ENCODE measurements at regions of chr1 and their contacts with region 1.

Region 1: DNA sequence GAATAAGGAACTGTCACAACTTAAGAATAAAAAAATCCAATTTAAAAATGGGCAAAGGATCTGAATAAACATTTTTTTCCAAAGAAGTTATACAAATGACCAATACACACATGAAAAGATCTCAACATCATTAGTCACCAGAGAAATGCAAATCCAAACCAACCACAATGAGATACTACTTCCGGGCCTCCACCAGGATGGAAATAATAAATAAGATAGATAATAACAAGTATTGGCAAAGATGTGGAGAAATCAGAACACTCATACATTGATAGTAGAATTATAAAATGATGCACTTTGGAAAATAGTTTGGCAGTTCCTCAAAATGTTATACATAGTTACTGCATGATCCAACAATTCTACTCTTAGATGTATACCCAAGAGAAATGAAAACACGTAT is 18.7 kb downstream of the ZSWIM5 start:
- DNase-seq: no peak
- H3K4me3 ChIP-seq: no peak overlapping the region
- H3K27ac ChIP-seq: no peak overlapping the region
- H3K27me3 ChIP-seq: no peaks in the 10 kb centered on the region
- CTCF ChIP-seq: no peak

Region 2: GRCh38 chr1:45037456-45037855 is 150.3 kb before region 1 on chr1:
- CTCF ChIA-PET with region 1: no interaction called
- POLR2A ChIA-PET with region 1: interaction called, 13 read pairs
- DNase-seq: no peak
- H3K4me3 ChIP-seq: no peak overlapping the region
- H3K27ac ChIP-seq: no peak overlapping the region
- H3K27me3 ChIP-seq: peaks cover 2% of the 10 kb centered on the region
- CTCF ChIP-seq: no peak

Region 3: DNA sequence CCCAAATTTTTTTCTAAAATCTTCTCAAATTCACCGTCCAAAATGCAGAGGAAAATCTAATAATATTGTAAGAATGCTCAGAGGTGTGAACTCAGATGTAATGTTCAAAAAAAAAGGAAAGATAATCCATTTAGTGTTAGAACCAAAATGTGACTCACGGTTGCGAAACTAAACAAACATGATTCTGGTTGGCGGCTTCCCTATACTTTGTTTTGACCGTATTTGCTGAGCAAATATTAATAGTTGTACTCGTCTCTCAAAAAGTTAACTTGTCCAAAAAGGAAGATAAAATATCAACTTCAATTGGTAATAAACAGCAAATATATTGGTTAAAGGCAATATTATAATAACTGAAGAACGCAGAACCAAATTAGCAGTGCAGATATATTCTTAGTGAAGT is 15.7 kb before region 1 on chr1:
- CTCF ChIA-PET with region 1: no interaction called
- POLR2A ChIA-PET with region 1: no interaction called
- DNase-seq: no peak
- H3K4me3 ChIP-seq: no peak overlapping the region
- H3K27ac ChIP-seq: no peak overlapping the region
- H3K27me3 ChIP-seq: peaks cover 2% of the 10 kb centered on the region
- CTCF ChIP-seq: no peak

Region 4: GRCh38 chr1:45205910-45206721 is 18.4 kb after region 1 on chr1 and contains the start of gene ZSWIM5:
- CTCF ChIA-PET with region 1: no interaction called
- POLR2A ChIA-PET with region 1: no interaction called
- DNase-seq: peak; percentile 11
- H3K4me3 ChIP-seq: peak within 1 kb of the TSS; percentile 66
- H3K27ac ChIP-seq: no peak within 1 kb of the TSS
- H3K27me3 ChIP-seq: peaks cover 31% of the 10 kb centered on the region
- CTCF ChIP-seq: no peak
- polyA plus RNA-seq, gene ZSWIM5: 0.06 and 0.09 TPM in 2 replicates

Measured in AG04450 (cell line).